ENCODE measurements at regions of chr19 and their contacts with region 1.

Region 1: GRCh38 chr19:55385740-55386529 is at the start of gene RPL28:
- DNase-seq: peak; percentile 92 to 99
- H3K4me3 ChIP-seq: peak within 1 kb of the TSS; percentile 68 to 91
- H3K27ac ChIP-seq: peak within 1 kb of the TSS; percentile 92 to 93
- H3K4me1 ChIP-seq: peaks cover 11 to 39% of the 10 kb centered on the region in 2 donors
- H3K27me3 ChIP-seq: no peaks in the 10 kb centered on the region
- CTCF ChIP-seq: no peak
- total RNA-seq, gene RPL28: 542 TPM

Region 2: GRCh38 chr19:55258828-55259539 is 127.0 kb before region 1 on chr19 and contains the start of gene PPP6R1:
- intact Hi-C with region 1: loop called (anchors 1 kb)
- DNase-seq: peak; percentile 92 to 99
- H3K4me3 ChIP-seq: peak within 1 kb of the TSS; percentile 85 to 87
- H3K27ac ChIP-seq: peak within 1 kb of the TSS; percentile 84 to 88
- H3K4me1 ChIP-seq: peaks cover 8 to 24% of the 10 kb centered on the region in 2 donors
- H3K27me3 ChIP-seq: no peaks in the 10 kb centered on the region
- CTCF ChIP-seq: peak in 1 of 3 experiments; percentile 15
- total RNA-seq, gene PPP6R1: 68.3 TPM

Region 3: GRCh38 chr19:55301459-55302317 is 84.2 kb before region 1 on chr19:
- intact Hi-C with region 1: loop called (anchors 2 kb)
- DNase-seq: peak; percentile 36 to 88
- H3K4me3 ChIP-seq: peak overlapping the region; percentile 39 to 52
- H3K27ac ChIP-seq: no peak overlapping the region
- H3K4me1 ChIP-seq: peaks cover 0 to 7% of the 10 kb centered on the region in 2 donors
- H3K27me3 ChIP-seq: no peaks in the 10 kb centered on the region
- CTCF ChIP-seq: peak; percentile 87 to 97 (median 94)

Region 4: GRCh38 chr19:55407800-55408532 is 22.0 kb after region 1 on chr19:
- intact Hi-C with region 1: loop called (anchors 1 kb)
- DNase-seq: peak; percentile 95 to 99
- H3K4me3 ChIP-seq: peak overlapping the region; percentile 86 to 92
- H3K27ac ChIP-seq: peak overlapping the region; percentile 96 to 99
- H3K4me1 ChIP-seq: peaks cover 11 to 13% of the 10 kb centered on the region in 2 donors
- H3K27me3 ChIP-seq: no peaks in the 10 kb centered on the region
- CTCF ChIP-seq: no peak

Region 5: GRCh38 chr19:55437410-55438075 is 51.6 kb after region 1 on chr19:
- intact Hi-C with region 1: no loop called
- DNase-seq: no peak
- H3K4me3 ChIP-seq: no peak overlapping the region
- H3K27ac ChIP-seq: no peak overlapping the region
- H3K4me1 ChIP-seq: no peaks in the 10 kb centered on the region
- H3K27me3 ChIP-seq: peaks cover 29% of the 10 kb centered on the region
- CTCF ChIP-seq: no peak

Region 6: DNA sequence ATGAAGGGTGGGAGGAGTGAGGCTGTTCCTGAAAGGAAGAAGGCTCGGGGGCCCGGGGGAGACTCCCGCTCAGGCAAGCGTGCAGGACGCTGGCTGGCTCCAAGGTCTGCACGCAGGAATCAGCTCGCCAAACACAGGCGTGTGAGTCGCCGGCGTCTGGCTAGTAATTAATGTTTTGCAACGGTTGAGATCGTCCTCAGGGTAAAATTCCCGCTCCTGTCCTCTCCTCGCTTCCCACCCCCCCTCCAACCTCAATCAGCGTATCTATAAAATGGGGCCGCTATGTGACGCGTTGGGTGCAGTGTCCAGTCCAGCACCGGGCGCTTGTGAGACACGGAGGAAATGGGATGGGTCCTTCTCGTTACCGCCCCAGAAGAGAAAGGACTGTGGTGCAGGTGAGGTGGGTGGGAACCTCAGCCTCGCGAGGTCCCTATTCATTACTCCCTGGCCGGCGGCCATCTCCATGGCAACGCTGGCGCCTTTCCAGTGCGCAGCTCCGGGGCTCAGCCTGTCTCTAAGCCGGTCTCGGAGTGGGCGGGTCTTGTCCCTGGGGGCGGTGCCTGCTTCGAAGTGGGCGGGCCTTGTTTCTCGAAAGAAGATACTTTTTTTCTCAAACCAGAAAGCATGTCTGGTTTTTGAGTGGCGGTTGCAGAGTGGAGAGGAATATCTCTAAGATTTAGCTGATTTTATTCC is 201.2 kb after region 1 on chr19:
- intact Hi-C with region 1: loop called (anchors 10 kb)
- DNase-seq: peak; percentile 76 to 95
- H3K4me3 ChIP-seq: peak overlapping the region; percentile 28 to 59
- H3K27ac ChIP-seq: no peak overlapping the region
- H3K4me1 ChIP-seq: peaks cover 14 to 15% of the 10 kb centered on the region in 2 donors
- H3K27me3 ChIP-seq: no peaks in the 10 kb centered on the region
- CTCF ChIP-seq: no peak

Region 7: GRCh38 chr19:55674841-55675660 is 289.1 kb after region 1 on chr19 and contains the start of gene EPN1:
- intact Hi-C with region 1: no loop called
- DNase-seq: peak; percentile 77 to 97
- H3K4me3 ChIP-seq: peak within 1 kb of the TSS; percentile 97 to 99
- H3K27ac ChIP-seq: peak within 1 kb of the TSS; percentile 84 to 92
- H3K4me1 ChIP-seq: peaks cover 6 to 27% of the 10 kb centered on the region in 2 donors
- H3K27me3 ChIP-seq: no peaks in the 10 kb centered on the region
- CTCF ChIP-seq: no peak
- total RNA-seq, gene EPN1: 122 TPM

Measured in ascending aorta (tissue), 2 donors.